Dorsolateral prefrontal cortex (tissue), 120 donors: ENCODE measurements at regions of chr11 and their contacts with region 1.

Region 1: DNA sequence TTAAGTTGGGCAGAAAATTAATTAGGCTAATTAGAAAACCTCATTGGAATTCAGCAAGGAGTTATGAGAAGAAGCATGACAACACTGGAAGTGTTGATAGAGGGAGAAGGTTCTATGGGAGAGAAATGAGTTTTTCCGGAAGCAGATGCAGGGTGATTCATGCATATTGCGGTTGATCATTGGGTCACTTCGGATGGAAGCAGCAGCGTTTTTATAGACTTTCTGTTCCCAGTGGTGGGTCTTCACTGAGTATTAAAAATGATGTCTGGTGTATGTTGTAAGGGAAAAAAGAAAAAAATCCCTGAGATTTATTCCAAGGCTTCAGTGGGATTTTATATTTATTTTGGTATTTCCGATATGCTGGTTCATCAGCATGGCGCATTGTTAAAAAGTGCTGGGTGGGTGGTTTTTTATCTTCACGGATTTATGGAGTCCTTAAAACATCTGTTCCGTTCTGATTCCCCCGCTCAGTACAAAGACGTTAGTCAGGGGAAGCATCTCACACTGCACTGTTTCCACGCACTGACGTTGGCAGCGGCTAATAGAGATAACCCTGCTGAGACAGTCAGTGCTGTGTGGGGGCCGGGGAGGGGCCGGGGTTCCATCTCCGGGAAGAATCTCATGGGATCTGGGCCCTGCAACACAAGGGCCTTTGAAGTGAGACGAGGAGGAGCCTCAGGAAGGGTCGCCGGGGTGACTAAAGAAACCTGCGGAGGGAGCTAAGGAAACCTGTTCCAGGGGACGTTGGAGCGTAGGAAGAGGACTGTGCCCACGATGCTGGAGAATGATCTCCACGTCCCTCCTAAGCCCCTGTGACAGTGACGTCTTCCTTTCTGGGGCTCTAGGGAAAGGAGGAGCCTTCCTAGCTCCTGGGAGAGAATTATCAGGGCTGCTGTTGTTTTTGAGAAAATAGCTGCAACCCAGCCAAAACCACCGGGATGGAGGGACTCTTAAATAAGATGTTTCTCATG is 390.0 kb downstream of the NTM start:
- DNase-seq: peak in 6 of 10 donors; percentile 44 to 74 (median 61)
- H3K4me3 ChIP-seq: peak overlapping the region in 39 of 59 donors; percentile 1 to 57 (median 25)
- H3K27ac ChIP-seq: peak overlapping the region in 43 of 59 donors; percentile 12 to 81 (median 59)
- H3K27me3 ChIP-seq: no peaks in the 10 kb centered on the region
- CTCF ChIP-seq: peak in 1 of 56 donors; percentile 16

Region 2: DNA sequence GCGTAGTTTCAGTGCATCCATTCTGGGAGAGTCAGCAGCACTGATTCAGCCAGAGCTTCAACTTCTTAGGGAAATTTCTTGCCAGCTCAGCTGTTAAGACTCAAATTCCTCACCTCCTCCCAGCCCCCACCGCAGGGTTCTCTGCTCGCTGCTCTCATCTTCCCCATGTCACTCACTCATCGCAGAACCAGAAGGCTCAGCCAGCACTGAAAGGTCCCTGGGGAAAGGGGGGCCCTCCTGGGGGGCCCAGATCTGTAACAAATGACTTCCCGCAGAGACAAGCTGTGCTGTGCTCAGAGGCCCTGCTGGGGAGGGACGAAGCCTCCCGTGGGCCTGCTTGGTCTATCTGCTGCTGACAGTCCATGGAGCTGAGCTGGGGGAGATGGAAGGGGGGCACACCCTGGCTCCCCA is 169.3 kb before region 1 on chr11:
- intact Hi-C with region 1: no loop called
- DNase-seq: no peak
- H3K4me3 ChIP-seq: no peak overlapping the region
- H3K27ac ChIP-seq: peak overlapping the region in 58 of 59 donors; percentile 62 to 100 (median 93)
- H3K27me3 ChIP-seq: no peaks in the 10 kb centered on the region
- CTCF ChIP-seq: no peak

Region 3: DNA sequence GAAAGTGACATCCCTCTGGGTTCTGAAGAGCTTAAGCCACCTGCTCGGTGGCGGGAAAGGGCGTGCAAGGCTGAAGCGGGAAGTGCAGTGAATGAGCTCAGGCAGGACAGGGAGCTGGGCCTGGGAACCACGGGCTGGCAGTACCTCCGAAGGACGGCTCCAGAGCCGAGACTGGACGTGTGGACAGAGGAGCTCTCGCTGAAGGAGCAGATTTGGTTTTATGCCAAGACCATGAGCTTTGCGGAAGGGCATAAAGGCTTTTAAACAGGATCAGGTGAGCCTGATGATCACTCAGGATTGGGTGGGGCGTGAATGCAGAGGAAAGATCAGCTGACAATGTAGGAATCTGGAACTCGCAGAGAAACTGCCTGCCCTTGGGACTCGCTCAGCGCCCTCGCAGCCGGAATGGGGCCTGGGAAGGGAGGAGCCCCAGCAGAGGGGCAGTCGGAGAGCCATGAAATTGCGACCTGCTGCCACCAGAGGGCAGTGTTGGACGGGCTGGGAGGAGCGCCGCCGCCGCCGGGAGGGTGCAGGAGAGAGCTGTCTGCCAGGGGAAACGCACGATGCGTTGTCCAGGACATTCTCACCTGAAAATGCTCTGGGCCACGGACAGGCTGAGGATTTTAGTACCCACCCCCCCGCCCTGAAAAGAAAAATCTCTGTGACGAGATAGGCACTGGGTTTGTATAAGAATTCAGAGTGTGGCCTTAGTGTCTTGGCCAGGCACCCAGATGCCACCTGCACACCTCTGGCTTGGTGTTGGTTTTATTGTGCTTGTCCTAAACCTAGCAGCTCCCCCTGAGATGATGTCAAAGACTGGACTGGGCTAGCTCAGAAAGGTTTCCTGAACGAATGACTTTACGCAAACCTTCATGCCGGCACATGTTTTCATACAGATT is 65.6 kb before region 1 on chr11:
- intact Hi-C with region 1: no loop called
- DNase-seq: peak; percentile 73 to 93 (median 80)
- H3K4me3 ChIP-seq: peak overlapping the region in 41 of 59 donors; percentile 0 to 53 (median 25)
- H3K27ac ChIP-seq: peak overlapping the region in 52 of 59 donors; percentile 2 to 83 (median 59)
- H3K27me3 ChIP-seq: no peaks in the 10 kb centered on the region
- CTCF ChIP-seq: peak; percentile 66 to 99 (median 97)

Region 4: GRCh38 chr11:131859538-131860210 is 99.3 kb after region 1 on chr11:
- intact Hi-C with region 1: loop called in 1 of 2 experiments (anchors 5 kb)
- DNase-seq: no peak
- H3K4me3 ChIP-seq: no peak overlapping the region
- H3K27ac ChIP-seq: no peak overlapping the region
- H3K27me3 ChIP-seq: no peaks in the 10 kb centered on the region
- CTCF ChIP-seq: no peak